Uterus (tissue), 4 donors: ENCODE measurements at regions of chr9 and their contacts with region 1.

Region 1: GRCh38 chr9:107732781-107733522 is 243.4 kb upstream of the KLF4 start:
- DNase-seq: peak; percentile 53 to 54
- H3K4me3 ChIP-seq: peak overlapping the region; percentile 4 to 5
- H3K27ac ChIP-seq: peak overlapping the region; percentile 80 to 91
- H3K4me1 ChIP-seq: peaks cover 5 to 14% of the 10 kb centered on the region in 2 donors
- H3K27me3 ChIP-seq: no peaks in the 10 kb centered on the region
- CTCF ChIP-seq: no peak
- POLR2A ChIP-seq: no peak

Region 2: GRCh38 chr9:107489687-107490605 is 243.0 kb before region 1 on chr9 and contains the start of gene KLF4:
- intact Hi-C with region 1: loop called (anchors 10 kb)
- DNase-seq: peak; percentile 92 to 96
- H3K4me3 ChIP-seq: peak within 1 kb of the TSS; percentile 76 to 90
- H3K27ac ChIP-seq: peak within 1 kb of the TSS; percentile 89 to 94
- H3K4me1 ChIP-seq: no peaks in the 10 kb centered on the region
- H3K27me3 ChIP-seq: no peaks in the 10 kb centered on the region
- CTCF ChIP-seq: peak in 1 of 4 experiments; percentile 3
- POLR2A ChIP-seq: peak; percentile 46 to 98
- total RNA-seq, gene KLF4: 20.2 to 152 (median 94.7) TPM

Region 3: GRCh38 chr9:107782381-107782780 is 49.4 kb after region 1 on chr9:
- intact Hi-C with region 1: no loop called
- DNase-seq: no peak
- H3K4me3 ChIP-seq: no peak overlapping the region
- H3K27ac ChIP-seq: no peak overlapping the region
- H3K4me1 ChIP-seq: no peaks in the 10 kb centered on the region
- H3K27me3 ChIP-seq: no peaks in the 10 kb centered on the region
- CTCF ChIP-seq: no peak
- POLR2A ChIP-seq: no peak